HepG2 (cell line): ENCODE measurements at regions of chr12 and their contacts with region 1.

Region 1: GRCh38 chr12:122190842-122191668 is 8.1 kb downstream of the LRRC43 start:
- DNase-seq: peak; percentile 60
- ATAC-seq: peak; percentile 91
- H3K4me3 ChIP-seq: no peak overlapping the region
- H3K27ac ChIP-seq: no peak overlapping the region
- H3K4me1 ChIP-seq: peaks cover 5% of the 10 kb centered on the region; the same call in 1 of the 2 replicates
- H3K27me3 ChIP-seq: peaks cover 9 to 28% of the 10 kb centered on the region in 2 experiments
- CTCF ChIP-seq: peak; percentile 90
- EP300 ChIP-seq: no peak
- POLR2A ChIP-seq: no peak
- RAD21 ChIP-seq: peak; percentile 83

Region 2: GRCh38 chr12:122130150-122130549 is 60.9 kb before region 1 on chr12:
- CTCF ChIA-PET with region 1: interaction called, 21 read pairs
- POLR2A ChIA-PET with region 1: no interaction called
- in situ Hi-C with region 1: no loop called
- intact Hi-C with region 1: loop called (anchors 1 kb)
- DNase-seq: no peak
- ATAC-seq: no peak
- H3K4me3 ChIP-seq: no peak overlapping the region
- H3K27ac ChIP-seq: no peak overlapping the region
- H3K4me1 ChIP-seq: peaks cover 24% of the 10 kb centered on the region
- H3K27me3 ChIP-seq: no peaks in the 10 kb centered on the region
- CTCF ChIP-seq: no peak
- EP300 ChIP-seq: no peak
- POLR2A ChIP-seq: no peak
- RAD21 ChIP-seq: no peak

Region 3: DNA sequence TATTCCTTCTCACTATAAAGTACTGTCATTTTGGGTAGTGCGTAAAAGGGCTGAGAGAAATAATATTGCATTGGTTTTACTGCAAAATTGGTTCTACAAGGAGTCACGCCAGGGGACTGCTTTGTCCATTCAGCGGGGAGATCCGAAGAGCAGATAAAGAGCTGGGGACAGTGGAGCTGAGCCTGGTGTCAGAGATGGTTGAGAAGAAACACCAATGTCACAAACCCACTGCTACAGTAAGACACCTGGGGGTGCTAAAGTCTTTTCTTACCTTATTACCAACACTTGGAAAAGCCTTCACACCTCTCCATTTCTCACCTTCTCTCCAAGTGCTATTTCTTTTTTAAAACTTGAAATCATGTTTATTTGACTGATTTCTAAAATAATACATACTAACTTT is 31.2 kb before region 1 on chr12:
- CTCF ChIA-PET with region 1: no interaction called
- POLR2A ChIA-PET with region 1: no interaction called
- in situ Hi-C with region 1: no loop called
- intact Hi-C with region 1: no loop called
- DNase-seq: no peak
- ATAC-seq: peak; percentile 35; the same call in 1 of the 3 replicates
- H3K4me3 ChIP-seq: no peak overlapping the region
- H3K27ac ChIP-seq: no peak overlapping the region
- H3K4me1 ChIP-seq: 0 out of 2 replicates have a peak, but pooled peaks cover 9% of the 10 kb centered on the region
- H3K27me3 ChIP-seq: peaks cover 0 to 8% of the 10 kb centered on the region in 2 experiments; a peak in 3 of 5 replicates
- CTCF ChIP-seq: peak; percentile 29
- EP300 ChIP-seq: no peak
- POLR2A ChIP-seq: no peak
- RAD21 ChIP-seq: no peak